AG04449 (cell line): ENCODE measurements at regions of chr9 and their contacts with region 1.

Region 1: DNA sequence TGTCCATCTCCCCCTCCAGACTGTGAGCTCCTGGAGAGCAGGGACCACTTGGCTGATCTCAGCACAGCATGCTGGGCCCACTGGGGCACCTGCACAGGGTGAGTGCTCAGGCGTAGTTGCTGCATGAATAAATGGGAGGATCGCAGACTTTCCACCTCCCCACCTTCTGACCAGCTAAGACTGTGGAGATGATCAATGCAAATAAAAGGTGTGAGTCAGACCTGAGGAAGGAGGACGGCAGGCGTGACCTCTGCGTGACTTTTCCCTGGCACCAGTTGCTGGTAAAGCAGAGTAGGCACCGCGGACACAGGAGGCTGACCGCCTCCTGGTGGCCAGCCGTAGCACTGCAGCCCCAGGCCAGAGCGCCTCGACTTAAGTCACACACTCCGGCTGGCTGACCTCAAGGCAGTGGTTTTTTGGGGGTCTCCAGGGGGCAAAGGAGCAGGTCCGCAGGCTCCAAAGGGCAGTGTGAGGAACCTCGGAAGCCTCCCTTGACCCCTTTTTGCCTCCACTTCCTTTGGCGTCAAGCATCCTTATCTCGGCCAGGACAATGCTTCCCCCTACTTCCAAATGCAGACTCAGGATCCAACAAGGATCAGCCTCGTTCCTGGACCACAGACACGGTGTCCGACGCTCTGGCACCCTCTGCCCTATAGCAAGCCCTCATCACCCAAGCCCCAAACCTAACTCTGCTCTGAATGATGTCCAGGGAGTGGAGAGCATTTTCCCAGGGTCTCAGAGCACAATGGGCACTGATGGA is 12.7 kb upstream of the TDRD7 start:
- DNase-seq: peak; percentile 16
- H3K4me3 ChIP-seq: no peak overlapping the region
- CTCF ChIP-seq: peak; percentile 97

Region 2: DNA sequence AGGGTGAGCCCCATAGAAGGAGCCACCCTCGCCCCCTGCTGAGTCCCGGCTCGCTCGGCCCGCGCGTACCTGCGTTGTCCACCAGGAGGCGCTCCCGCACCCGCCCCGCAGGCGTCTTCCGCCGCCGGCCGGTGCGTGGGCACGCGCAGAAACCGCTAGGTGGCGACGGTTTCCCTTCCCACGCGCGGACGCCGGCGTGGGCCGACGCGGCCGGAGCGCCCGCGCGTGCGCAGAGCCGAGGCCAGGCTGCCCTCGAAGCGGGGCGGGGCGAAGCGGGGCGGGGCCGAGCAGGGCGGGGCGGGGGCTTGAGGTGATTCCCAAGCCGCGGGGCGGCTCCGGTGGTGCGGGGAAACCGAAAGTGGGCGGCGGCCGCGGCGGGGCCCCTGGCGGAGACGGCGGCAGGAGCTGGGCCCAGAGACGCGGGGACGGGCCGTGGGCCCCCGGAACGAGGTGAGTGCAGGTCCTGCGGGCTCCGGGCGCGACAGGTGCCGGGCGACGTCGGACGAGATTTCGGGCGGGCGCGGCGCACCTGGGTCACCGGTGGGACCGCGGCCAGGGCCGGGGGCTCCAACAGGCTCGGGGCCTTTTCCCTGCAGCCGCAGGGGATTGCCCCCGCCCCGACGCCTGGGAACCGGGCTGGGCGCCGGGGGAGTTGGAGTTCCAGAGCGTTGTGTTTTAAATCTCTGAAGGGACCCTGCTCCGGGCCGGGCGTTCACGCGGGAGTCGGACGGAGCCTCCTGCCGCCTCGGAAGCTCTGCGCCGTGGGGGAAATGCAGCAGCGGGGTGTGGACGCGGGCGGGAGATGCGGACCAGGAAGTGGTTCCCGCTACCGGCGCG is 12.8 kb after region 1 on chr9 and contains the start of gene TDRD7:
- CTCF ChIA-PET with region 1: interaction called, 35 read pairs
- POLR2A ChIA-PET with region 1: no interaction called
- DNase-seq: no peak
- H3K4me3 ChIP-seq: peak within 1 kb of the TSS; percentile 69
- CTCF ChIP-seq: peak; percentile 99

Region 3: DNA sequence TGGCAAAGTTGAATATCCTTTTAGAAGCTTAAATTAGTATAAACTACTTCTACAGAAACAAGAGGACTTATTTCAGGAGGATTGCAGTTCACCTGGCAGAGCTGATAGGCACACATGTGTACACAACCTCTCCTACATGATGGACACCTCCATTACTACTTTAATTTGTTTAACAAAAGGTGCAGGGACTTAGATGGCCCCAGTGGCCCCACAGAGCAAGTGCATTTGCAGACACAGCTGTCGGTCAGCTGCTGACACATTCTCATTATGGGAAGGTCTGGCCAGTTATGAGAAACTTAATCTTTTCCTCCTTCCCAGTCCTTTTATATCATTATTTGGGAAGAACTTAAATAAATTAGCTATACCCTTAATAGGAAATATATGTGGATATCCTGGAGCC is 41.0 kb after region 1 on chr9:
- CTCF ChIA-PET with region 1: no interaction called
- POLR2A ChIA-PET with region 1: no interaction called
- DNase-seq: no peak
- H3K4me3 ChIP-seq: no peak overlapping the region
- CTCF ChIP-seq: no peak